Caco-2 (cell line): ENCODE measurements at regions of chr1 and their contacts with region 1.

Region 1: GRCh38 chr1:28736450-28737306 is at the start of gene YTHDF2:
- DNase-seq: peak; percentile 93 to 95
- H3K4me3 ChIP-seq: peak within 1 kb of the TSS; percentile 62
- H3K4me3 Mint-ChIP-seq: peak within 1 kb of the TSS; percentile 92
- H3K27ac Mint-ChIP-seq: peak within 1 kb of the TSS; percentile 92
- H3K4me1 ChIP-seq: peaks cover 17% of the 10 kb centered on the region; the same call in 1 of the 2 replicates
- H3K4me1 Mint-ChIP-seq: no peaks in the 10 kb centered on the region
- H3K27me3 ChIP-seq: no peaks in the 10 kb centered on the region
- H3K27me3 Mint-ChIP-seq: no peaks in the 10 kb centered on the region
- CTCF ChIP-seq: peak; percentile 65 to 70
- total RNA-seq, gene YTHDF2: 45.8 and 51.5 TPM in 2 replicates

Region 2: DNA sequence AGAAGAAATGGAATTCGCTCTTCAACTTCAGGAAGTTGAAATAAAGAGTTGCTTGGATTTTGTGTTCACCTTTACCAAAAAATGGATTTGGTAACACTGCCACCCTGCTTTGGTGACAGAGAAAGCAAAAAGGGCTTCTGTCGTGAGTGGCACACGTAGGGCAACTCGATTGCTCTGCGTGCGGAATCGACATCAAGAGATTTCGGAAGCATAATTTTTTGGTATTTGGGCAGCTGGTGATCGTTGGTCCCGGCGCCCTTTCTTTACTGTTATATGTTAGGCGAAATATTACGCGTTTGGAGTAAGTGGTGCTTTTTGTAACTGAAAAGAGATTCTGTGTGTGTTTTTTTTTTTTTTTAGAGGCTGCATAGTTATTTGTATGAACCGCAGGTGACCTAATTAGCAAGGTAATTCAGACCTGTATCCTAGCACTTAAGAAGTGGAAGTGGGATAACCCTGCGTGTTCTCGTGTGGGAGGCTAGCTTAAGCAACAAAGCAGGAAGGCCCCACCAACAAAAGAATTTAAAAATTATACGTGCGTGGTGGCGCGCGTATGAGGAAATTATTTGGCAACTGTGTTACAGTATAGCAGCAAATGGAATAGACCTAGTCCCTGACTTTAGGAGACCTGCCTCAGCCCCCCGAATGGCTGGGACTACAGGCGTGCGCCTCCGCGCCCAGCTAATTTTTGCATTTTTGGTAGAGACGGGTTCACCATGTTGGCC is 88.0 kb before region 1 on chr1 and contains the start of gene RNU11:
- CTCF ChIA-PET with region 1: interaction called, 17 read pairs
- POLR2A ChIA-PET with region 1: interaction called, 54 read pairs
- intact Hi-C with region 1: loop called (anchors 1 kb)
- DNase-seq: peak; percentile 85 to 90
- H3K4me3 ChIP-seq: peak within 1 kb of the TSS; percentile 29
- H3K4me3 Mint-ChIP-seq: peak within 1 kb of the TSS; percentile 88
- H3K27ac Mint-ChIP-seq: peak within 1 kb of the TSS; percentile 96
- H3K4me1 ChIP-seq: peaks cover 9% of the 10 kb centered on the region; the same call in 1 of the 2 replicates
- H3K4me1 Mint-ChIP-seq: peaks cover 16% of the 10 kb centered on the region
- H3K27me3 ChIP-seq: no peaks in the 10 kb centered on the region
- H3K27me3 Mint-ChIP-seq: no peaks in the 10 kb centered on the region
- CTCF ChIP-seq: no peak
- total RNA-seq, gene RNU11: not detected in 2 replicates

Region 3: GRCh38 chr1:28756846-28757245 is 20.2 kb after region 1 on chr1:
- CTCF ChIA-PET with region 1: interaction called, 18 read pairs
- POLR2A ChIA-PET with region 1: interaction called, 4 read pairs
- intact Hi-C with region 1: no loop called
- DNase-seq: peak in 1 of 2 experiments; percentile 10
- H3K4me3 ChIP-seq: no peak overlapping the region
- H3K4me3 Mint-ChIP-seq: no peak overlapping the region
- H3K27ac Mint-ChIP-seq: no peak overlapping the region
- H3K4me1 ChIP-seq: peaks cover 13% of the 10 kb centered on the region
- H3K4me1 Mint-ChIP-seq: peaks cover 7% of the 10 kb centered on the region
- H3K27me3 ChIP-seq: no peaks in the 10 kb centered on the region
- H3K27me3 Mint-ChIP-seq: no peaks in the 10 kb centered on the region
- CTCF ChIP-seq: no peak

Region 4: GRCh38 chr1:28914228-28915030 is 177.8 kb after region 1 on chr1 and contains the start of gene EPB41:
- CTCF ChIA-PET with region 1: no interaction called
- POLR2A ChIA-PET with region 1: interaction called, 10 read pairs
- intact Hi-C with region 1: no loop called
- DNase-seq: peak; percentile 93 to 94
- H3K4me3 ChIP-seq: peak within 1 kb of the TSS; percentile 73
- H3K4me3 Mint-ChIP-seq: peak within 1 kb of the TSS; percentile 81
- H3K27ac Mint-ChIP-seq: peak within 1 kb of the TSS; percentile 81
- H3K4me1 ChIP-seq: peaks cover 6% of the 10 kb centered on the region; the same call in 1 of the 2 replicates
- H3K4me1 Mint-ChIP-seq: no peaks in the 10 kb centered on the region
- H3K27me3 ChIP-seq: no peaks in the 10 kb centered on the region
- H3K27me3 Mint-ChIP-seq: no peaks in the 10 kb centered on the region
- CTCF ChIP-seq: no peak
- total RNA-seq, gene EPB41: 29.5 and 29.8 TPM in 2 replicates

Region 5: GRCh38 chr1:29682919-29683295 is 946.2 kb after region 1 on chr1:
- CTCF ChIA-PET with region 1: no interaction called
- POLR2A ChIA-PET with region 1: no interaction called
- intact Hi-C with region 1: no loop called
- DNase-seq: no peak
- H3K4me3 ChIP-seq: no peak overlapping the region
- H3K4me3 Mint-ChIP-seq: no peak overlapping the region
- H3K27ac Mint-ChIP-seq: no peak overlapping the region
- H3K4me1 ChIP-seq: no peaks in the 10 kb centered on the region
- H3K4me1 Mint-ChIP-seq: no peaks in the 10 kb centered on the region
- H3K27me3 ChIP-seq: no peaks in the 10 kb centered on the region
- H3K27me3 Mint-ChIP-seq: peaks cover 11% of the 10 kb centered on the region
- CTCF ChIP-seq: no peak